ENCODE measurements at regions of chr9 and their contacts with region 1.

Region 1: DNA sequence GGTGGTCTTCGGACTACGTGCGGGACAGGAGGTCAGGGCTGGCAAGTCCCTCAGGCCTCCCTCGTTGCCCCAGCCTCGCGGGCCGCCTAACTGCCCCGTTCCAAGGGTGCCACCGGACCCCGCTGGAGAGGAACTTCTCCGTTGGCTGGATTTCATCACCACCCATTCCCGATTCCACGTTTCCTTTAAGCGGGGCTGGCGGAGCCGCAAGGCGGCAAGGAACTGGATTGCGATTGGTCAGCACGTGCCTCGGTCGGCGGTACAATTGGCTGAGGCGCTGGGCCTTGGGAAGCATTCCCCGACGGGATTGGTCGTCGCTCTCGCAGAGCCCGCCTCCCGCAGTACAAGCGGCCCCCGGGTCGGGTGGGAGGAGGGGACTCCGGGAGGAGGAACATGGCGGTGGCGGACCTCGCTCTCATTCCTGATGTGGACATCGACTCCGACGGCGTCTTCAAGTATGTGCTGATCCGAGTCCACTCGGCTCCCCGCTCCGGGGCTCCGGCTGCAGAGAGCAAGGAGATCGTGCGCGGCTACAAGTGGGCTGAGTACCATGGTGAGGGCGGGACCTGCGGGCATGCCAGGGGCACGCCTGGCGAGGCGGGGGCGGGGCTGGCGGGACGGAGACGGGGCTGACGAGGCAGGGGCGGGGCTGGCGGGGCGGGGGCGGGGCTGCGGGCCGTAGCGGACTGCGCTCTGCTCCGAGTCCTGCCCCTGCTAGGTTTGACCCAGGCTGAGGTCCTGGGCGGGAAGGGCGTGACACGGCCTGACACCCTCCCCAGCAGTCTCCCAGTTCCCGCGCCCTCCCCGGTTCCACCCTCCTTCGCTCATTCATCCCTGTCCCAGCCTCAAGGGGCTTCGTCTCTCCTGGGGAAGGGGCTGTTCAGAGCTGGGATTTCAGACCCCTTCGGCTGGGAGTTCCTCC is at the start of gene PHPT1:
- DNase-seq: peak; percentile 99 to 100 (median 99)
- H3K4me3 ChIP-seq: peak within 1 kb of the TSS; percentile 74 to 88 (median 83)
- H3K27ac ChIP-seq: peak within 1 kb of the TSS; percentile 93 to 95
- H3K4me1 ChIP-seq: peaks cover 0 to 28% (median 0%) of the 10 kb centered on the region in 3 donors
- H3K27me3 ChIP-seq: peaks cover 3% of the 10 kb centered on the region
- CTCF ChIP-seq: no peak
- total RNA-seq, gene PHPT1: 108 TPM

Region 2: DNA sequence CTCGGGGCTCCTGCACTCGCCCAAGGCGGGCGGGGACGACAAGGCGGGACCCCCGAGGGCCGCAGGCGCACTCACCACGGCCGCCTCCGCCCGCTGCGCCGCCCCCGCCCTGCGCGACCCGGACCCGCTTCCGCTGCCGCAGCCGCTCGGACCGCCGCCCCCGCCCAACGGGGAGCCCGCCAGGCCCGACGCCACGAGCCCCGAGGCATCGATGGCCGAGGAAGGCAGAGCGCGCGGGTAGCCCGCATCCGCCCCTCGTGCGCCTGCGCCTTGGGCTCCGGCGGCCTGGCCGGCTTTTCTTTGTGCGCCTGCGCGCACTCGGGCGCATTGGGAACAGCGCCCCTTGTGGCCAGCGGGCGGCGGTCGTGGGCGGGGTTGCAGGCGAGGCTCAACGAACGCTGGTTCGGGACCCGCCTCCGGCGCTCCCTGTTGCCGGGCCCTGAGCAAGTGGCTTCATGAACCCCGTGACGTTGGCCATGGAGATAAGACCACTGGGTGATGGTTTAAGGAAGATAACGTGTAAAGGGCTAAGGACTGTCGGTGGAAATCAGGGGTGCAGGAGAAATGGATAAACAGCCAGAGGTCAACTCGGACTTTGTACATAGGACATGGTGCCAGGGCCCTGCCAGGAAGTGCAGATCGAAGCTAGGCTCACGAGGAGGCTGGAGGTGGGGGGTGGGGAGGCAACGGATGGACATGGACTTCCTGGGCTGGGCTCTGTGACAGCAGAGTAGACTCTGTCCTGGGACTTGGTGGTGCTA is 95.4 kb after region 1 on chr9 and contains the starts of genes C8G and FBXW5:
- intact Hi-C with region 1: loop called (anchors 10 kb)
- DNase-seq: peak; percentile 96 to 99 (median 97)
- H3K4me3 ChIP-seq: peak within 1 kb of the TSS; percentile 30 to 84 (median 63)
- H3K27ac ChIP-seq: peak within 1 kb of the TSS; percentile 68 to 83
- H3K4me1 ChIP-seq: peaks cover 0 to 18% (median 9%) of the 10 kb centered on the region in 3 donors
- H3K27me3 ChIP-seq: no peaks in the 10 kb centered on the region
- CTCF ChIP-seq: peak; percentile 96
- total RNA-seq, gene C8G: 1.9 TPM
- total RNA-seq, gene FBXW5: 97.2 TPM

Region 3: GRCh38 chr9:137034863-137035761 is 185.8 kb after region 1 on chr9:
- intact Hi-C with region 1: no loop called
- DNase-seq: peak; percentile 88 to 94 (median 90)
- H3K4me3 ChIP-seq: no peak overlapping the region
- H3K27ac ChIP-seq: no peak overlapping the region
- H3K4me1 ChIP-seq: peaks cover 0 to 5% (median 0%) of the 10 kb centered on the region in 3 donors
- H3K27me3 ChIP-seq: no peaks in the 10 kb centered on the region
- CTCF ChIP-seq: peak; percentile 98

Measured in kidney (tissue), 22 donors.